ENCODE measurements at regions of chr18 and their contacts with region 1.

Region 1: GRCh38 chr18:11310476-11311086 is 161.2 kb upstream of the PIEZO2 start:
- DNase-seq: no peak
- H3K4me3 ChIP-seq: no peak overlapping the region
- CTCF ChIP-seq: peak; percentile 81

Region 2: DNA sequence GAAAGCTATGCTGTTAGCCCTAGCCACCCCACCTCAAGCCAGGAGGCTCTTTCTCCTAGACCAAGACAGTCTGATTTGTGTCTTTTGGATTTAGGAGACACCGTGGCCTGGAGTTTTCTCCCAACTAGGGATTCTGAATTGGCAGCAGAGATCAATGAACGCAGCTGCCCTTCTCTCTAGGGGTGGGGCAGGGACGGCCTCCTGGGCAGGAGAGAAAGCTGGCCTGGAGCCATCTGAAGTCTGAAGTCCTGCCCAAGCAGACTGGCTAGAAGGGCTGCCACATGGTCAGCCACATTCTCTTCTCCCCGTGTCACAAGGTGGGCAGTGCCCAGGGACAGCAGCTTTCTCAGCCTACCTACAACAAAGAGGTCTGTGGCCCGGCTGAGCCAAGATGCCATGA is 206.3 kb before region 1 on chr18:
- CTCF ChIA-PET with region 1: no interaction called
- POLR2A ChIA-PET with region 1: no interaction called
- DNase-seq: no peak
- H3K4me3 ChIP-seq: no peak overlapping the region
- CTCF ChIP-seq: no peak

Region 3: GRCh38 chr18:11163665-11164064 is 146.9 kb before region 1 on chr18:
- CTCF ChIA-PET with region 1: interaction called, 16 read pairs
- POLR2A ChIA-PET with region 1: no interaction called
- DNase-seq: no peak
- H3K4me3 ChIP-seq: no peak overlapping the region
- CTCF ChIP-seq: peak; percentile 28

Region 4: DNA sequence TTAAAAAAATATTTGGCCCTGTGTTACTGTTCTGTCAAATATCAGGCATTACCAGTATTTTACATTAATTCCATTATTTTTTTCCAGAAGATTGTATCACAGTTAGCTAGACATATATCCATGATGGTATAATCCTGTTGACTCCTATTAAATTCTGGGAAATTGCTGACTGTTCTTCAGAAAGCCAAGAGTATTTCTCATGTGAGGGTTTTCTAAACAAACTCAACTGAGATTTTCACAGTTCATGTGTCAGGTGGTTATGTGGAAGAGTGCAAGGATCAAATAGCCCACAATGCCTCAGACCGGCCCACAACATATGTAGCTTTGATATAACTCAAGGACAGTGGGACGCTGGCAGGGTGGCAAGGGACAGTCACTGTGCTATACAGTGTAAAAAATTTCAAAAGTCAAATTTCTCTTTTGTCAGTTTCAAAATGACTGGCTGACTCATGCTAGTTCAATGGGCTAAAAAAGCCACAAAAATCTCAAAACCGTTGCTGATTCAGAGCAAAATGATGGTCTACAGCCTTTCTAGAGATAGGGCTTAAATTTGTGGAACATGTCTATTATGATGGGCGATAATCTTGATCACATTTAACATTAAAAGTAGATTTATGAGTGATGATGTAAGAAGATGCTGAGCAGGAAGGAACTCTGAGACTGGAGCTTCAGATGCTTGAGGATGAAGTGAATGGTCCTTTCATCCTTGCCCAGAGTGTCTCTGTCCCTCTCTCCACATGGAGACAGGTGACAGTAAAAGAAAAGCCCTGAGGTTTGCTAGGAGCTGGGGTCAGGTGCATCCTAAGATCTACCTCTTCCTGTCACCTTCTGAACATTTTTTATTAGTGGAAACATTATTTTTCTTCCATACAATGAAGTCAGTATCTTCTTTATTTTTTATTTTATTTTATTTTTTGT is 14.6 kb after region 1 on chr18:
- CTCF ChIA-PET with region 1: interaction called, 56 read pairs
- POLR2A ChIA-PET with region 1: no interaction called
- DNase-seq: peak; percentile 67
- H3K4me3 ChIP-seq: no peak overlapping the region
- CTCF ChIP-seq: no peak

Region 5: DNA sequence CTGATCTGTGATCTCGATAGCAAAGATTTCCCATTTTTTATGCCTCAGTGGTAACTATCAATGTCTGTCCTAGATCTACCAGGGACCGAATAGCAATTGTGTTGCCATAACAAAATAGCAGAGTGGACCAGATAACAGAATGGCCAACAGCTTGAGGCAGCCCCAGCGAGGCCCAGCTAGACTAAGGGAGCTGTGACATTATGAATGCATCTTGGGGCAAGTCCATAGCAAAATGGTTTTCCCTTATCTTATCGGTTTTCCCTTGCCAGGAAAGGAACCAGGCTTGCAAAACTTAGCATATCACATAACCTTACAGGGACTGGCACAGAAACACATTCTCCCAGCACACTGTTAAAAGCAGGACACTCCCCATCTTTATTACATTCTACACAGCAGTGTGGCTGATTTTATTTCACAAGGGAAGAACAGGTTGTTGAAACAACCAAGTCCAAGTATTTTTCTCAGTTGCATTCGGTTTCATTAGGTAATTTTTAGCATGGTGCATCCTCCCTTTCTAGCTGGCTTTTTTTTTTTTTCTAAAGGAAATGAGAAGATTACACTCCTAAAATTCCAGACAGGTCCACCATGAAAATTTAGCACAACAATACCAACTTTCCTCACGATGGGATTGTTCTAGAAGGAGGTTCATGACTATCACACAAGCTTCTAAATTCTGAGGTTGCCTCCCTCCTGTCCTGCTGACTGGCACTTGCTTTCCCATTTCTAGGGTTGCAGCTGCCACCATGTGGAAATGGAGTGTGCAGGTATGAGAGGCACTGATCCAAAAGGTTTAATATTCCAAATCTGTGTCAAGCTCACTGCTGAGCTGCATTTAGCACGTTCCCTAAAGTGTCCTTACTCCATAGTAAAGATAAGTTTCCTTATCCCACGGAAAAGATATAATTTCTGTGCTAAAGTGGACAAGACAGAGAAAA is 201.8 kb after region 1 on chr18:
- CTCF ChIA-PET with region 1: interaction called, 35 read pairs
- POLR2A ChIA-PET with region 1: no interaction called
- DNase-seq: no peak
- H3K4me3 ChIP-seq: no peak overlapping the region
- CTCF ChIP-seq: peak; percentile 43

Region 6: DNA sequence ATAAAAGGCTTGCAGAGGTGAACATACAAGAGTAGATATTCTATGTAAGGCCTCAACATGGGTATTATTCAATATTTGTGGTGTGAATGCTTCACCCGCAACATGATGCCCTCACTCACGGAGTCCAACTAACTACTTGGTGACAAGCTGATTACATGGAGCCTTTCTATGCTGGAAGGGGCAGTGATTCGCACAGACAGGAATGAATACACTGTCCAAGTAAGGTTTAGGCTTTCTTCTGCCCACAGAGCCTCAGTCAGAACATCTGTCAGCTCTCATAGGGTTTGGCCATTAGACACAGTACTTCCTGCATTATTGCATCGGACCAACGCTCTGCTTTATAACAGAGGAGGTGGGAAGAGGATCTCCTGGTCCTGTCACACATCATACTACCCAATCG is 218.5 kb after region 1 on chr18:
- CTCF ChIA-PET with region 1: interaction called, 17 read pairs
- POLR2A ChIA-PET with region 1: no interaction called
- DNase-seq: peak; percentile 41
- H3K4me3 ChIP-seq: no peak overlapping the region
- CTCF ChIP-seq: no peak

Region 7: GRCh38 chr18:11561293-11561692 is 250.7 kb after region 1 on chr18:
- CTCF ChIA-PET with region 1: interaction called, 32 read pairs
- POLR2A ChIA-PET with region 1: no interaction called
- DNase-seq: no peak
- H3K4me3 ChIP-seq: no peak overlapping the region
- CTCF ChIP-seq: no peak